CD8-positive, alpha-beta T cell (primary cell): ENCODE measurements at regions of chr12 and their contacts with region 1.

Region 1: DNA sequence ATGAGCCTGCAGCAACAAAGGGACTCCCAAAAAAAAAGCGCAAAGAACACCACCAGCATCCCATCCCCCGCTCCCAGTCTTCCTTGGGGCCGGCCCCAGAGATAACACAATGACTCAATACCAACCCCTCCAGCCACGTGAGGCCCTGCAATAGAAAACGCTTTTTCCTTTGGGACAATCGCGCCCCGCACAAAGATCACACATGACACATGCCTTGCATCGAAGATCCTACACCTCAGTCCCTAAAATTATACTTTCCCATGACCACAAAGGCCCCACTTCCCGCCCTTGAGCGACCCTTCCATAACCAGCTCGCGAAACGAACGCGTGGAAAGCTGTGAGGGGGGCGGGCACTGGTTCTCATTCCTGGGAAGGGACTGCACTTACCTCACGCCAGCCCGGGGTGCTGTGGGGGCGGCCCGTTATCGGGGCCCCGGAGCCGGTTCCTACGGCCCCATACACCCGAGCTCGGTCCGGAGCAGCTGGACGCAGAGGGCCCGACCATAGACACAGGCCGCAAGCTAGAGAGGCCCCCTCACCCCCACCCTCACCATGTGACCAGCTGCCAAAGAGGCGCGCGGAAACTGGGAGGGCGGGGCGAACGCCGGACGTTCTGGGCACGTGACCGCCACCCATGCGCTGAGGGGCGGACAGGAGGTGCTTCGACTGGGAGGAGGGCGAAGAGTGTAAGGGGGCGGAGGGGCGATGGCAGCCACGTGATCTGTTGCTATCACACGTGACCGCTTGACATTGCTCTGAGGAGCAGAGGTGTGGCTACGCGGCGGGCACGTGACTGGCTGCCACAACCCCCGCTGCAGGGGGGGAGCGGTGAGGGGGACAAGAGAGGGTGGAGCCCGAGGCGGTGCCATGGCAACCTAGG is at the start of gene CDK4:
- DNase-seq: peak; percentile 96 to 100 (median 99)
- ATAC-seq: peak; percentile 78
- H3K4me3 ChIP-seq: peak within 1 kb of the TSS; percentile 80 to 85
- H3K4me3 Mint-ChIP-seq: peak within 1 kb of the TSS; percentile 90
- H3K27ac ChIP-seq: peak within 1 kb of the TSS; percentile 84 to 92
- H3K27ac Mint-ChIP-seq: peak within 1 kb of the TSS; percentile 88
- H3K4me1 ChIP-seq: peaks cover 50% of the 10 kb centered on the region
- H3K4me1 Mint-ChIP-seq: peaks cover 57% of the 10 kb centered on the region
- H3K27me3 ChIP-seq: no peaks in the 10 kb centered on the region
- H3K27me3 Mint-ChIP-seq: no peaks in the 10 kb centered on the region
- CTCF ChIP-seq: no peak
- total RNA-seq, gene CDK4: 8.5 to 10.0 TPM

Region 2: DNA sequence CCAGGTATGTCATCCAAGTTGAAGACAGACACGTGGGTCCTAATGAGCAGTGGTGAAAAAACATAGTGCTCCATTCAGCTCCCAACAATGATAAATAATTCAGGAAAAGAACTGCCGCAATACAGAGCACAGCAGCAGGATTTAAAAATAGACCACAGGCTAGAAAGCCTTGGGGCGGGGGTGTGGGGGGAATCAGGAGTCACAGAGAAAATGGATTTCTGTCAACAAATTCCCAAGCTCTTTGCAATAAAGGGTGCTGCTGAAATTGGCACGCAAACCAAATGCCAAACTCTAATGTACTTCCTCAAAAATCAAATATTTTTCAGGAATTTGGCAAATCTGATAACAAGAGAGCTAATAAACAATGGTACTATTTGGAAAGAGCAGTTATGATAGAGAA is 379.8 kb before region 1 on chr12:
- CTCF ChIA-PET with region 1: no interaction called
- POLR2A ChIA-PET with region 1: no interaction called
- intact Hi-C with region 1: no loop called
- DNase-seq: no peak
- ATAC-seq: no peak
- H3K4me3 ChIP-seq: no peak overlapping the region
- H3K4me3 Mint-ChIP-seq: no peak overlapping the region
- H3K27ac ChIP-seq: no peak overlapping the region
- H3K27ac Mint-ChIP-seq: no peak overlapping the region
- H3K4me1 ChIP-seq: no peaks in the 10 kb centered on the region
- H3K4me1 Mint-ChIP-seq: peaks cover 15% of the 10 kb centered on the region
- H3K27me3 ChIP-seq: no peaks in the 10 kb centered on the region
- H3K27me3 Mint-ChIP-seq: no peaks in the 10 kb centered on the region
- CTCF ChIP-seq: no peak

Region 3: DNA sequence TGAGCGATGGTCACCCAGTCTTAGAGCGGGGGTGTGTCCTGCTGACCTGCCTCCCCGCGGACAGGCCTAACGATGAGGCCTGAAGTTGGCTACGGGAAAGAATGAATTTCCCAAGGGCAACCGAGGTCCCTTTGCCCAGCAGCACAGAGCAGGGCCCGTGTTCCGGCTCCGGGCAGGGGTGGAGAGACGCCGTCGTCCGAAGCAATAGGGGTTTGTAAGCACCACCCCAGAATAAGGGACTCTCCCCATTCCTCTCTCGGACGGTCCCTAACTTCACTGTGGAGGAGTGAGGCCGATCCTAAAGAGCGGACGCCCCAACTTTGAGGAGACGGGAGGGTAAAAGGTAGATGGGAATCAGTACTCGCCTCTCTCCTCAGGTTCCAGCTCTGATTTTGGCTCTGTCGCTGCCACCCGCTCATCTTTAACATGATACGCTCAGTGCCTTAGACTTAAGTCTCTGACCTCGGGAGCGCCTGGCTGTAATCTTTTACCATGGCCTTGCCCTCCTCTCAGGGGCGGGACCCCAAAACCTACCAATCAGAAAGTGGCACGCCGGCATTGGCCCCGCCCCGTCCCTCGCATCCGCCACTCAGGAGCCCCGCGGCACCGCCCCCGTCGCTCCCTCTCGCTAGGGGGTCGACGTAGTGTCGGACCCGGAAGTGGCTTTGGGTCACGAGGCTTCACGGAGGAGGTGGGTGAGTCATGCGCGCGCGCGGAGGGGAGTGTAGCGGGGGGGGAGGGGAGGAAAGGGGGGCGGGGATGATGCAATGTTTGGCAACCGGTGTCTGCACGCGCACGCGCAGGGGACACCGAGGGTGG is 231.8 kb before region 1 on chr12 and contains the start of gene DDIT3:
- CTCF ChIA-PET with region 1: no interaction called
- POLR2A ChIA-PET with region 1: no interaction called
- intact Hi-C with region 1: loop called (anchors 1 to 2 kb)
- DNase-seq: peak; percentile 99 to 100 (median 100)
- ATAC-seq: peak; percentile 76
- H3K4me3 ChIP-seq: peak within 1 kb of the TSS; percentile 83 to 94
- H3K4me3 Mint-ChIP-seq: peak within 1 kb of the TSS; percentile 98
- H3K27ac ChIP-seq: peak within 1 kb of the TSS; percentile 97 to 100
- H3K27ac Mint-ChIP-seq: peak within 1 kb of the TSS; percentile 100
- H3K4me1 ChIP-seq: peaks cover 53% of the 10 kb centered on the region
- H3K4me1 Mint-ChIP-seq: peaks cover 54% of the 10 kb centered on the region
- H3K27me3 ChIP-seq: no peaks in the 10 kb centered on the region
- H3K27me3 Mint-ChIP-seq: no peaks in the 10 kb centered on the region
- CTCF ChIP-seq: no peak
- total RNA-seq, gene DDIT3: 137 to 143 TPM

Region 4: DNA sequence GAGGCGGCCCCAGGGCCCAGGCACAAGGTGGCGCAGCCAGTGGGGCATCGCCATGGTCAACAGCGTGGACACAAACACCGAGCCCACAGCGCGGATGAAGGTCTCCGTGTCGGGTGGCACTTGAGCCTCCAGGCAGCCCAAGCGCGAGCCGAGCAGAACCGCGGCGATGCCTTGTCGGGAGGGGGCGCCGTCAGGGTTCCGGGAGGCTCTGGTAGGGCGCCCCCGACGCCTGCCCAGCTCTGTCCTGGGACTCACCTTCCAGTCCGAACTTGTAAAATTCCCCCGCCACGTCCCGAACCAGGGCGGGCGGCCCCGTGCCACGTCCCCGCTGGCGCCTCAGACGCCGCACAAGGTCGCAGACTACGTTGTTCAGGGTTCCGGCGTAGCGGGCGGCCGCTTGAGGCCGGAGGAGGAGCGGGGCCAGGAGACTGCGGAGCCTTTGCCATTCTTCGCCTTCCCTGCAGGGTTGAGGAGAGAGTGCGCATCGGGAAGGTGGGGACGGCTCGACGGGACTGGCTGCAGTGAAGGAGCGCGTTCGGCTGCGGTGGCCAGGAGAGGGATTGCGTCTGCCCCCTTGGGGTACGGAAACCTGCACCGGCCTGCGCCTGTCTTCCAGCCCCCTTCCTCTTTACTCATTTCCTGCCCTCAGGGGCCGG is 13.1 kb after region 1 on chr12:
- CTCF ChIA-PET with region 1: interaction called, 16 read pairs
- POLR2A ChIA-PET with region 1: interaction called, 5 read pairs
- intact Hi-C with region 1: loop called in 1 of 2 experiments (anchors 1 kb)
- DNase-seq: peak in 7 of 9 experiments; percentile 51 to 70 (median 66)
- ATAC-seq: peak; percentile 72
- H3K4me3 ChIP-seq: peak overlapping the region; percentile 62 to 81
- H3K4me3 Mint-ChIP-seq: peak overlapping the region; percentile 86
- H3K27ac ChIP-seq: no peak overlapping the region
- H3K27ac Mint-ChIP-seq: no peak overlapping the region
- H3K4me1 ChIP-seq: peaks cover 26% of the 10 kb centered on the region
- H3K4me1 Mint-ChIP-seq: peaks cover 25% of the 10 kb centered on the region
- H3K27me3 ChIP-seq: peaks cover 15 to 28% of the 10 kb centered on the region in 2 experiments
- H3K27me3 Mint-ChIP-seq: peaks cover 22% of the 10 kb centered on the region
- CTCF ChIP-seq: peak; percentile 51

Region 5: DNA sequence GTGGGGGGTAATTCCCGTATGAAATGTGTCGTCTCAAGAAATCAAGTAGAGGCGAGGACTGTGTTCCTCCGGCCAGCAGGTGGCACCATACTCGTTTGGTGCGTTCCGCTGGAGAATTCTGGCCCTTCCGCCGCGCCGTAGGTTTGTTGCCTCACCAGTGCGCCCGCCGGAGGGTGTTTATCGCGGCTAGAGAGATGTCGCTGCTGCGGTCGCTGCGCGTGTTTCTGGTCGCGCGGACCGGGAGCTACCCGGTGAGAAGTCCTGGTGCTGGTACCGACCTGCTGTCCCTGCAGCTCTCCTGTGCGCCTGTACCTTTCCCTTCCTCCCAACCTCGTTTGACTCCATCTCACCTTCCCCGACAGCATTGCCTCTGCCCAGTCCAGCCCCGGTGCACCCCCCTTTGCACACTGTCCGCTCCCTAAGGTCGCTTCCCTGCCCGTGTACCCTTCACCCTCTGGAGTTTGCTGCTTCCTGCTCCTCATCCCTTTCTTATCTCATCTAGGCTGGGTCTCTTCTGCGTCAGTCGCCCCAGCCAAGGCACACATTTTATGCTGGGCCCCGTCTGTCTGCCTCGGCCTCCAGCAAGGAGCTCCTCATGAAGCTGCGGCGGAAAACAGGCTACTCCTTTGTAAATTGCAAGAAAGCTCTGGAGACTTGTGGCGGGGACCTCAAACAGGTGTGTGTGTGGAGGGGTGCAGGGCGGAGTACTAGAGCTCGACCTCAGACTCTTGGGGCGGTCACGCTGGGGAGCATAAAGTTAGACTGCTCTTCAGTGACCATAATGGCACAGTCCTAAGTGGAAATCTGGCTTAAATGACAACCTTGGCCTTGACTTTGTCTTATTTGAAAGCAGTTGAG is 30.8 kb after region 1 on chr12 and contains the start of gene TSFM:
- CTCF ChIA-PET with region 1: interaction called, 12 read pairs
- POLR2A ChIA-PET with region 1: interaction called, 5 read pairs
- intact Hi-C with region 1: loop called in 1 of 2 experiments (anchors 1 kb)
- DNase-seq: peak; percentile 93 to 99 (median 97)
- ATAC-seq: peak; percentile 96
- H3K4me3 ChIP-seq: peak within 1 kb of the TSS; percentile 87 to 95
- H3K4me3 Mint-ChIP-seq: peak within 1 kb of the TSS; percentile 100
- H3K27ac ChIP-seq: peak within 1 kb of the TSS; percentile 72 to 85
- H3K27ac Mint-ChIP-seq: peak within 1 kb of the TSS; percentile 99
- H3K4me1 ChIP-seq: peaks cover 36% of the 10 kb centered on the region
- H3K4me1 Mint-ChIP-seq: peaks cover 51% of the 10 kb centered on the region
- H3K27me3 ChIP-seq: no peaks in the 10 kb centered on the region
- H3K27me3 Mint-ChIP-seq: no peaks in the 10 kb centered on the region
- CTCF ChIP-seq: peak; percentile 92
- total RNA-seq, gene TSFM: 37.0 to 37.1 TPM

Region 6: GRCh38 chr12:57846577-57847319 is 94.7 kb after region 1 on chr12 and contains the start of gene CTDSP2:
- CTCF ChIA-PET with region 1: interaction called, 6 read pairs
- POLR2A ChIA-PET with region 1: interaction called, 3 read pairs
- intact Hi-C with region 1: loop called (anchors 2 to 5 kb)
- DNase-seq: peak; percentile 52 to 95 (median 88)
- ATAC-seq: peak; percentile 39
- H3K4me3 ChIP-seq: peak within 1 kb of the TSS; percentile 95 to 100
- H3K4me3 Mint-ChIP-seq: peak within 1 kb of the TSS; percentile 87
- H3K27ac ChIP-seq: peak within 1 kb of the TSS; percentile 81
- H3K27ac Mint-ChIP-seq: peak within 1 kb of the TSS; percentile 90
- H3K4me1 ChIP-seq: peaks cover 36% of the 10 kb centered on the region
- H3K4me1 Mint-ChIP-seq: peaks cover 45% of the 10 kb centered on the region
- H3K27me3 ChIP-seq: no peaks in the 10 kb centered on the region
- H3K27me3 Mint-ChIP-seq: peaks cover 4% of the 10 kb centered on the region
- CTCF ChIP-seq: no peak
- total RNA-seq, gene CTDSP2: 68.1 to 70.5 TPM

Region 7: GRCh38 chr12:58253663-58254062 is 501.6 kb after region 1 on chr12:
- CTCF ChIA-PET with region 1: no interaction called
- POLR2A ChIA-PET with region 1: no interaction called
- intact Hi-C with region 1: no loop called
- DNase-seq: no peak
- ATAC-seq: no peak
- H3K4me3 ChIP-seq: no peak overlapping the region
- H3K4me3 Mint-ChIP-seq: no peak overlapping the region
- H3K27ac ChIP-seq: no peak overlapping the region
- H3K27ac Mint-ChIP-seq: no peak overlapping the region
- H3K4me1 ChIP-seq: no peaks in the 10 kb centered on the region
- H3K4me1 Mint-ChIP-seq: no peaks in the 10 kb centered on the region
- H3K27me3 ChIP-seq: no peaks in the 10 kb centered on the region
- H3K27me3 Mint-ChIP-seq: peaks cover 15% of the 10 kb centered on the region
- CTCF ChIP-seq: no peak